Activated T-helper 2 cell treated with anti-CD3 and anti-CD28 coated beads, Interferon-gamma antibody, Interleukin-2, Interleukin-4, amounts not matched to agents 10 μg/mL and 5 μg/mL and 100 μg/mL, durations not matched to agents 14 hours and 24 hours and 36 hours (primary cell): ENCODE measurements at regions of chr3 and their contacts with region 1.

Region 1: DNA sequence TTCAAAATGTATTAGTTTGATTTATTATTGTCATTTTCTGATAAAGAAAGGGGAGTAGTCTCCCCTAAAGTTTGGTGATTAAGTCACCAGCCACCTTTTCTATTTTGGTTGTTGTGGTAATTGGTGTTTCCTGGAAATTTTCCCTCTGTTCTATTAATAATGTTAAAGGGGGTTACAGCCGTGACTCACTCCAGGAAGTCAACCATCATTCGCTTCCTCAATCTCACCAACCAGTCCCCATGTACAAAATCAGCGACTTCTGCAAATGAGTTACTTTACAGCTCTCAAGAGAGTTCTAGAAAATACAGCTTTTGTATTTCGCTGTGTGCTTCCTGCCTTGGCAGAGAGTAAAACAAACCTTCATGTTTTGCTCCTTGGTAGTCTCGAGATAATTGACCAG is 285.1 kb downstream of the LPP start:
- DNase-seq: peak; percentile 15
- H3K4me3 Mint-ChIP-seq: peak overlapping the region; percentile 45
- H3K27ac Mint-ChIP-seq: peak overlapping the region; percentile 79
- H3K4me1 Mint-ChIP-seq: peaks cover 47% of the 10 kb centered on the region
- H3K27me3 Mint-ChIP-seq: no peaks in the 10 kb centered on the region

Region 2: DNA sequence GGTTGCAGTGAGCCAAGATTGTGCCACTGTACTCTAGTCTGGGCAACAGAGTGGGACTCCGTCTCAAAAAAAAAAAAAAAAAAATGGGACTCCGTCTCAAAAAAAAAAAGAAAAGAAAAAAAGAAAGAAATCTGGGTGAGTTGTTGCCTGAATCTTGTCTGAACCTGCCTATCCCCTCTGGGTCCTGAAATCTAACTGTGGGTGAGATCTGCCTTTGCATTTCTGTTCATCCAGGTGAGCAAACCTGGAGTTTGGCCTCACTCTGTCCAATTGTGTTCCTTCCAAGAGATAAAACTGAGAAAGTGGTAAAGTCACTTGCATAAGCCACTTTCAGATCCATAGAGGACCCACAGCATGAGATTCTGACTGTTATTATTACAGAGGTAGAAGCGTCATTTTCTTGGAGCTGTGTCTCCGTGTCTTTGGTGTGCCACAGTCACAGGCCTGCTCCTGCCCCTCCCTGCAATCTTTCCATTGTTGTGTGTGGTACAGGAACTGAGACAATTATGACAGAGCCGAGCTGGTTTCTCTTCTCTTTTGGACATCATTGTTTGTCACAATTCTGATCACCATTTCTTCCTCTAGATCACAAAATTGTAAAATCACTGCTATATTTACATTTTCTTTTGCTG is 49.3 kb before region 1 on chr3:
- intact Hi-C with region 1: loop called (anchors 2 kb)
- DNase-seq: peak; percentile 30
- H3K4me3 Mint-ChIP-seq: no peak overlapping the region
- H3K27ac Mint-ChIP-seq: peak overlapping the region; percentile 75
- H3K4me1 Mint-ChIP-seq: peaks cover 33% of the 10 kb centered on the region
- H3K27me3 Mint-ChIP-seq: no peaks in the 10 kb centered on the region

Region 3: GRCh38 chr3:188554404-188554803 is 115.3 kb after region 1 on chr3:
- intact Hi-C with region 1: loop called (anchors 5 kb)
- DNase-seq: no peak
- H3K4me3 Mint-ChIP-seq: no peak overlapping the region
- H3K27ac Mint-ChIP-seq: no peak overlapping the region
- H3K4me1 Mint-ChIP-seq: peaks cover 35% of the 10 kb centered on the region
- H3K27me3 Mint-ChIP-seq: no peaks in the 10 kb centered on the region